T-cell (primary cell): ENCODE measurements at regions of chr2 and their contacts with region 1.

Region 1: GRCh38 chr2:224628416-224628815 is 43.3 kb upstream of the CUL3 start:
- DNase-seq: no peak
- ATAC-seq: no peak
- H3K4me3 ChIP-seq: no peak overlapping the region
- H3K4me3 Mint-ChIP-seq: no peak overlapping the region
- H3K27ac ChIP-seq: no peak overlapping the region
- H3K27ac Mint-ChIP-seq: no peak overlapping the region
- H3K4me1 ChIP-seq: no peaks in the 10 kb centered on the region
- H3K4me1 Mint-ChIP-seq: no peaks in the 10 kb centered on the region
- H3K27me3 ChIP-seq: peaks cover 0 to 3% of the 10 kb centered on the region in 2 experiments
- H3K27me3 Mint-ChIP-seq: no peaks in the 10 kb centered on the region

Region 2: GRCh38 chr2:223908304-223908998 is 720.0 kb before region 1 on chr2:
- CTCF ChIA-PET with region 1: no interaction called
- POLR2A ChIA-PET with region 1: interaction called in 1 of 2 experiments, 10 read pairs
- DNase-seq: no peak
- ATAC-seq: no peak
- H3K4me3 ChIP-seq: no peak overlapping the region
- H3K4me3 Mint-ChIP-seq: no peak overlapping the region
- H3K27ac ChIP-seq: no peak overlapping the region
- H3K27ac Mint-ChIP-seq: peak overlapping the region in 1 of 2 donors; percentile 16
- H3K4me1 ChIP-seq: no peaks in the 10 kb centered on the region
- H3K4me1 Mint-ChIP-seq: peaks cover 3 to 6% (median 6%) of the 10 kb centered on the region in 3 donors
- H3K27me3 ChIP-seq: no peaks in the 10 kb centered on the region
- H3K27me3 Mint-ChIP-seq: no peaks in the 10 kb centered on the region

Region 3: GRCh38 chr2:224576088-224576715 is 52.2 kb before region 1 on chr2:
- CTCF ChIA-PET with region 1: no interaction called
- POLR2A ChIA-PET with region 1: no interaction called
- DNase-seq: peak in 1 of 35 experiments; percentile 20
- ATAC-seq: peak; percentile 28 to 55 (median 42)
- H3K4me3 ChIP-seq: no peak overlapping the region
- H3K4me3 Mint-ChIP-seq: peak overlapping the region; percentile 25 to 68 (median 66)
- H3K27ac ChIP-seq: no peak overlapping the region
- H3K27ac Mint-ChIP-seq: peak overlapping the region; percentile 19 to 62
- H3K4me1 ChIP-seq: peaks cover 30 to 73% of the 10 kb centered on the region in 2 experiments
- H3K4me1 Mint-ChIP-seq: peaks cover 85 to 95% (median 94%) of the 10 kb centered on the region in 3 donors
- H3K27me3 ChIP-seq: no peaks in the 10 kb centered on the region
- H3K27me3 Mint-ChIP-seq: no peaks in the 10 kb centered on the region